T-cell (primary cell): ENCODE measurements at regions of chr1 and their contacts with region 1.

Region 1: GRCh38 chr1:200620273-200621131 is at the start of gene KIF14:
- DNase-seq: peak; percentile 76 to 96 (median 91)
- ATAC-seq: peak; percentile 97 to 99 (median 98)
- H3K4me3 ChIP-seq: peak within 1 kb of the TSS; percentile 75 to 81
- H3K4me3 Mint-ChIP-seq: peak within 1 kb of the TSS; percentile 94 to 96 (median 96)
- H3K27ac ChIP-seq: peak within 1 kb of the TSS; percentile 4
- H3K27ac Mint-ChIP-seq: peak within 1 kb of the TSS; percentile 83 to 90
- H3K4me1 ChIP-seq: peaks cover 7 to 18% of the 10 kb centered on the region in 2 experiments
- H3K4me1 Mint-ChIP-seq: peaks cover 21 to 28% (median 23%) of the 10 kb centered on the region in 3 donors
- H3K27me3 ChIP-seq: peaks cover 0 to 6% of the 10 kb centered on the region in 2 experiments
- H3K27me3 Mint-ChIP-seq: no peaks in the 10 kb centered on the region
- total RNA-seq, gene KIF14: 0.03 to 0.33 (median 0.19) TPM

Region 2: GRCh38 chr1:200669314-200670241 is 49.1 kb after region 1 on chr1 and contains the start of gene DDX59:
- CTCF ChIA-PET with region 1: interaction called, 6 to 54 read pairs
- POLR2A ChIA-PET with region 1: interaction called in 1 of 2 experiments, 6 read pairs
- DNase-seq: peak; percentile 73 to 92 (median 83)
- ATAC-seq: peak; percentile 88 to 91 (median 89)
- H3K4me3 ChIP-seq: peak within 1 kb of the TSS; percentile 61 to 78
- H3K4me3 Mint-ChIP-seq: peak within 1 kb of the TSS; percentile 93 to 95 (median 95)
- H3K27ac ChIP-seq: peak within 1 kb of the TSS; percentile 86
- H3K27ac Mint-ChIP-seq: peak within 1 kb of the TSS; percentile 88 to 97
- H3K4me1 ChIP-seq: peaks cover 12 to 17% of the 10 kb centered on the region in 2 experiments
- H3K4me1 Mint-ChIP-seq: peaks cover 44 to 52% (median 50%) of the 10 kb centered on the region in 3 donors
- H3K27me3 ChIP-seq: no peaks in the 10 kb centered on the region
- H3K27me3 Mint-ChIP-seq: no peaks in the 10 kb centered on the region
- total RNA-seq, gene DDX59: 19.2 to 38.7 (median 31.7) TPM

Region 3: DNA sequence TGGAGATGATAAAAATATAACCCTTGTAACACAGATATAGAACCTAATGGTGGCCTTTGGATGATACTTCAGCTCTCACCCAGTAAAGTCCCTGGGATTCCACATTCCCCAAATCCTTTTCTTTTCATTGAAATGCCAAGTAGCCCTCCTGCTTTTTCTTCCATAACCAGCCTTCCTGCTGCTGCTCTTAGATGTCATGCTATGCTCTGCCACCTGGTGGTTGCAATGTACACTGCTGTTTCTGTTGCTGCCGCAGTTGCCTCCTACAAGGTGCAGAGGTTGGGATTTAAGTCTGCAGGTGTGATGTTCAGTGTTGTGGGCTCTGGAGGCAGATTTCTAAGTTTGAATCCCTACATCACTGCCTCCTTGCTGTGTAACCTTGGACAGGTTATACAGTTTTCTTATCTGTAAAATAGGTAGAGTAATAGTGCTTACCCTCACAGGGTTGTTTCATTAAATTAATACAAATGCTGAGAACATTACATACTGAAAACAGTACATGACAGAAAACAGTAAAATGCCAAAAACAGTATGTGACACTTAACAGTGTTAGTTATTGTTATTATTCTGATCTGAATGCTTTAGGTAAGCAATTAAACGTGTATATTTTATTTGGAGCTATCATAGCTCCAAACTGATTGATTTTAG is 182.5 kb after region 1 on chr1:
- CTCF ChIA-PET with region 1: interaction called, 35 to 115 read pairs
- POLR2A ChIA-PET with region 1: interaction called, 3 to 8 read pairs
- DNase-seq: peak; percentile 24 to 86 (median 61)
- ATAC-seq: peak; percentile 73 to 80 (median 78)
- H3K4me3 ChIP-seq: no peak overlapping the region
- H3K4me3 Mint-ChIP-seq: no peak overlapping the region
- H3K27ac ChIP-seq: no peak overlapping the region
- H3K27ac Mint-ChIP-seq: no peak overlapping the region
- H3K4me1 ChIP-seq: no peaks in the 10 kb centered on the region
- H3K4me1 Mint-ChIP-seq: peaks cover 2 to 5% (median 4%) of the 10 kb centered on the region in 3 donors
- H3K27me3 ChIP-seq: no peaks in the 10 kb centered on the region
- H3K27me3 Mint-ChIP-seq: no peaks in the 10 kb centered on the region

Region 4: DNA sequence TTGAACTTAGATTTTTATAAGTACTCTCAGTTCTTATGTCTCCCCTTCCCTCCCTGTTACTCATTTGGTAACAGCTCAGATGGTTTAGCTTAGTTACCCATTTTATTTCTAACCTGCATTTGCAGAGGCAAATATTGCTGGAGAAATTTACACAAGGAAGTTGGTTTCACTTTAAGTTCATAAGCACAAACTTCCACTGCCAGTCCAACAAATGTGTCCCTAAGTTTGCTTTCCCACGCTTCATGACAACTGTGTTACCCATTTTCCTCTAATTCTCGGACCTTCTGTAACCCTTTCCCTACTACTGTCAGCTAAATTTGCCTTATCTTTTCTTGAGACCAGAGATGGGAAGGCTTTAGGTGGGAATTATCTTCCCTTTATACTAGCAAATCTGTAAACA is 188.3 kb after region 1 on chr1:
- CTCF ChIA-PET with region 1: interaction called, 35 to 115 read pairs
- POLR2A ChIA-PET with region 1: interaction called in 1 of 2 experiments, 3 read pairs
- DNase-seq: no peak
- ATAC-seq: no peak
- H3K4me3 ChIP-seq: no peak overlapping the region
- H3K4me3 Mint-ChIP-seq: no peak overlapping the region
- H3K27ac ChIP-seq: no peak overlapping the region
- H3K27ac Mint-ChIP-seq: no peak overlapping the region
- H3K4me1 ChIP-seq: no peaks in the 10 kb centered on the region
- H3K4me1 Mint-ChIP-seq: no peaks in the 10 kb centered on the region
- H3K27me3 ChIP-seq: no peaks in the 10 kb centered on the region
- H3K27me3 Mint-ChIP-seq: no peaks in the 10 kb centered on the region

Region 5: GRCh38 chr1:201114236-201115131 is 494.0 kb after region 1 on chr1:
- CTCF ChIA-PET with region 1: interaction called in 1 of 2 experiments, 10 read pairs
- POLR2A ChIA-PET with region 1: no interaction called
- DNase-seq: peak; percentile 44 to 82 (median 61)
- ATAC-seq: peak; percentile 87 to 89 (median 89)
- H3K4me3 ChIP-seq: peak overlapping the region; percentile 71 to 84
- H3K4me3 Mint-ChIP-seq: peak overlapping the region; percentile 84 to 90 (median 88)
- H3K27ac ChIP-seq: peak overlapping the region; percentile 16
- H3K27ac Mint-ChIP-seq: peak overlapping the region; percentile 83 to 90
- H3K4me1 ChIP-seq: peaks cover 3 to 22% of the 10 kb centered on the region in 2 experiments
- H3K4me1 Mint-ChIP-seq: peaks cover 4 to 21% (median 20%) of the 10 kb centered on the region in 3 donors
- H3K27me3 ChIP-seq: peaks cover 2 to 12% of the 10 kb centered on the region in 2 experiments
- H3K27me3 Mint-ChIP-seq: no peaks in the 10 kb centered on the region

Region 6: DNA sequence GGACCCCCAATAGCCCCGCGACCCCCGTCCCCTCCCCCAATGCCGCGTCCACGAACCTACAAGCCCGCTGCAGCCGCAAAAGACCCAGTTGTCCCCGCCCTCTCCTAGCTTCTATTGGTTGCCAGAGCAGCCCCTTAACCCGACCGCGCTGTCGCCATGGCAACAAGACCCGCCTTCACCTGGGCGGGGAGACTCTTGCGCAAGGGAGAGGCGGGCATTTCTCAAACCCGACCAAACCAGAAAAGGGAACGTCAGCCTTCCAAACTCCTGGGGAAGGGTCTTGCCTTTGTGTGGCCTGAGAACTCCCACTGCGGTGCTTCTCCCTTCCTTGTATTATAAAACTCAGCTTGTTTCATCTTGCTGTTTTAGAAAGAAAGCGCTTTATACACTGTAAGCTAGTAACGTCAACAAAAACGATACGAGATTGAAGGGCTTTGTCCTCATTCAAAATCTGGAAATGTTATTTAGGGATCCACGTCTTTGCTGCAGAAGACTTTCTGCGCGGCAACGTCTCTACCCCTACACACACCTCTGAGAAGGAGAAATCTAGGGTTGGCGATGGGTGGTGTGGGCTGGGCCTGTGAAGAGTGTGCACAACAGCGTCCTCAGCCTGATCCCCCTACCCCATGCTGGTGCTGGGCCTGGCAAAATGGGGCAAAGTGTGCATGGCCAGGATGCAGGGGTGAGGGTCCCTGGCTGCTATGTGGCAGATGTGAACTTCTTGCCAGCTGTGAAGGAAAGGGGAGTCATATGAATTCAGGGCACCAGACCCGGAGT is 534.1 kb after region 1 on chr1 and contains the start of gene TMEM9:
- CTCF ChIA-PET with region 1: interaction called in 1 of 2 experiments, 10 read pairs
- POLR2A ChIA-PET with region 1: interaction called in 1 of 2 experiments, 8 read pairs
- DNase-seq: peak; percentile 90 to 99 (median 97)
- ATAC-seq: peak; percentile 96 to 98 (median 96)
- H3K4me3 ChIP-seq: peak within 1 kb of the TSS; percentile 62 to 76
- H3K4me3 Mint-ChIP-seq: peak within 1 kb of the TSS; percentile 86 to 93 (median 86)
- H3K27ac ChIP-seq: peak within 1 kb of the TSS; percentile 10
- H3K27ac Mint-ChIP-seq: peak within 1 kb of the TSS; percentile 88 to 95
- H3K4me1 ChIP-seq: peaks cover 3 to 19% of the 10 kb centered on the region in 2 experiments
- H3K4me1 Mint-ChIP-seq: peaks cover 23 to 27% (median 25%) of the 10 kb centered on the region in 3 donors
- H3K27me3 ChIP-seq: peaks cover 0 to 12% of the 10 kb centered on the region in 2 experiments
- H3K27me3 Mint-ChIP-seq: peaks cover 8 to 23% of the 10 kb centered on the region in 2 donors
- total RNA-seq, gene TMEM9: 15.5 to 22.2 (median 17.7) TPM